Aorta (tissue), 5 donors: ENCODE measurements at regions of chr16 and their contacts with region 1.

Region 1: GRCh38 chr16:10039220-10040096 is 142.8 kb downstream of the GRIN2A start:
- DNase-seq: no peak
- ATAC-seq: peak; percentile 67
- H3K4me3 ChIP-seq: peak overlapping the region in 1 of 2 donors; percentile 29
- H3K27ac ChIP-seq: no peak overlapping the region
- H3K4me1 ChIP-seq: no peaks in the 10 kb centered on the region
- H3K27me3 ChIP-seq: no peaks in the 10 kb centered on the region

Region 2: GRCh38 chr16:9966569-9967157 is 72.8 kb before region 1 on chr16:
- intact Hi-C with region 1: no loop called
- DNase-seq: no peak
- ATAC-seq: no peak
- H3K4me3 ChIP-seq: no peak overlapping the region
- H3K27ac ChIP-seq: no peak overlapping the region
- H3K4me1 ChIP-seq: no peaks in the 10 kb centered on the region
- H3K27me3 ChIP-seq: no peaks in the 10 kb centered on the region

Region 3: GRCh38 chr16:10088380-10088793 is 48.9 kb after region 1 on chr16:
- intact Hi-C with region 1: loop called in 1 of 2 experiments (anchors 10 kb)
- DNase-seq: peak in 1 of 2 donors; percentile 48
- ATAC-seq: peak; percentile 72
- H3K4me3 ChIP-seq: no peak overlapping the region
- H3K27ac ChIP-seq: no peak overlapping the region
- H3K4me1 ChIP-seq: no peaks in the 10 kb centered on the region
- H3K27me3 ChIP-seq: no peaks in the 10 kb centered on the region